AG04450 (cell line): ENCODE measurements at regions of chr5 and their contacts with region 1.

Region 1: DNA sequence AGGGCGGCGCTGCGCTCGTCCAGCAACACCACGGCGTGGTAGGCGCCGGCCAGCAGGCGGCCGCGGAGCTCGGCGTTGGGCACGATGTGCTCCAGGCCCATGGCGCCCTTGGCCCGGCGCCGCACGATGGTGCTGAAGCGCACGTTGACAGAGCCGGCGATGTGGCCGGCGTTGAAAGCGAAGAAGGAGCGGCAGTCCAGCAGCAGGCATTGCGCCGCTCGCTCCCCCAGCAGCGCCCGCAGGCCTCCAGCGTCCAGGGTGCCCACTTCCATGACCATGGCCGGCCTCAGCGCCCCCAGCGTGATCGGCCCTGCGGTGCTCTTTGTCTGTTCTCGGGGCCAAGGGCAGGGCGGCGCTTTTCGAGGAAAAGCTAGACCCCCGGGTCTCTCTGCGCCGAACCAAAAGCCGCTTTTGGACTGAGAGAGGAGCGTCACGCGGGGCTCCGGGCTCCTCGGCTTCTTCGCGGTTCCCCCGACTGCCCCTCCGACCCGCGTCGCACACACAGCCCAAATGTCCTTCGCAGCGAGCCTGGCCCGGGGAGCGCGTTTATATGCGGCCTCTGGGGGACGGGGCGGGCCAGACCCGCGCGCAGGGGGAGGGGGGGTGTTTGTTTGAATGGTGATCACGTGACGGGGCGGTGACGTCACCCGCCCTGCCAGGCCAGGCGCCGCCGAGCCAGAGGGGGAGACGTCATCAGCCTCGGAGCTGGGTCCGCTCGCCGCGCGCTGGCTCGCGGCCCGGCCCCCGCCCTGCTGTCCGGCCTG is at the start of gene DUSP1:
- DNase-seq: peak; percentile 96
- H3K4me3 ChIP-seq: peak within 1 kb of the TSS; percentile 100
- H3K27ac ChIP-seq: peak within 1 kb of the TSS; percentile 100
- H3K27me3 ChIP-seq: no peaks in the 10 kb centered on the region
- CTCF ChIP-seq: peak; percentile 56
- polyA plus RNA-seq, gene DUSP1: 98.8 and 147 TPM in 2 replicates

Region 2: DNA sequence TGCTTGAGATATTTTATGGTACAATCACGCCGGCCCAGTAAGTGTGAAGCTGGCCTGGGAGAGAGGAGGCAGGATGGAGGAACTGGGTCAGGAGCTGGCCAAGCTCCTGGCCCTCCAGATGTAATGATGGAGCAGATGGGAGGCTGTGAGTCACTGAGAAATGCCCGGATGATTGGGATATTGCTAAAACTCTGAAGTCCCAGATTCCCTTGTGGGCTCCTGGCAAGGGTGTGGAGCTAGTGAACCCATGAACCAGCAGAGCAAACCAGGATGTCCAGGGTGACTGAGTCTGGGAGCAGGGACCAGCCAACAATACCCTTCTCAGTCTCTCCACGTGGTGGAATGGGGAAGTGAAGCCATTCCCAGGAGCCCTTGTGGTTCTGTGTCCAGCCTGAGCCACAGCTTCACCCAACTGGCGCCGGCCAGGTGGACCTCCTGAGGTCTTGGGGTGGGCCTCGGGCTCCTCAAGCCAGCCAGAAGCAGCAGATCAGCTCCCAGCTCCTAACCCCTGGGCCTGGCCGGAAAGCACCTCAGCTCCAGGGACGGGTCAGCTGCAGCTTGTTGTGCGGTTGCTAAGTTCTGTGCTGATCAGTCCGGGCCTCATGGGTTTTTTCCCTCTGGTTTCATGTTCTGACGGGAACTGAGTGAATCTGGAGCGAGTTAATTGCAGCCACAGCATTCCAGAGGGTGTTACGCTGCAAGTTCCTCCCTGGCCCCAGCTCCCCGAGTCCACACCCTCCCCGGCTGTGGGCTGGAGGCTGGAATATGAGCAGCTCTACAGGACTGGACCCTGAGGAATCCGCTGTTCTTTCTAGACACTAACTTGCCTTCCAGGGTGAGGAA is 37.5 kb before region 1 on chr5:
- CTCF ChIA-PET with region 1: interaction called, 3 read pairs
- POLR2A ChIA-PET with region 1: interaction called, 14 read pairs
- DNase-seq: peak; percentile 52
- H3K4me3 ChIP-seq: no peak overlapping the region
- H3K27ac ChIP-seq: peak overlapping the region; percentile 75
- H3K27me3 ChIP-seq: no peaks in the 10 kb centered on the region
- CTCF ChIP-seq: no peak

Region 3: GRCh38 chr5:172751766-172752510 is 18.9 kb before region 1 on chr5:
- CTCF ChIA-PET with region 1: no interaction called
- POLR2A ChIA-PET with region 1: no interaction called
- DNase-seq: no peak
- H3K4me3 ChIP-seq: no peak overlapping the region
- H3K27ac ChIP-seq: no peak overlapping the region
- H3K27me3 ChIP-seq: no peaks in the 10 kb centered on the region
- CTCF ChIP-seq: no peak

Region 4: DNA sequence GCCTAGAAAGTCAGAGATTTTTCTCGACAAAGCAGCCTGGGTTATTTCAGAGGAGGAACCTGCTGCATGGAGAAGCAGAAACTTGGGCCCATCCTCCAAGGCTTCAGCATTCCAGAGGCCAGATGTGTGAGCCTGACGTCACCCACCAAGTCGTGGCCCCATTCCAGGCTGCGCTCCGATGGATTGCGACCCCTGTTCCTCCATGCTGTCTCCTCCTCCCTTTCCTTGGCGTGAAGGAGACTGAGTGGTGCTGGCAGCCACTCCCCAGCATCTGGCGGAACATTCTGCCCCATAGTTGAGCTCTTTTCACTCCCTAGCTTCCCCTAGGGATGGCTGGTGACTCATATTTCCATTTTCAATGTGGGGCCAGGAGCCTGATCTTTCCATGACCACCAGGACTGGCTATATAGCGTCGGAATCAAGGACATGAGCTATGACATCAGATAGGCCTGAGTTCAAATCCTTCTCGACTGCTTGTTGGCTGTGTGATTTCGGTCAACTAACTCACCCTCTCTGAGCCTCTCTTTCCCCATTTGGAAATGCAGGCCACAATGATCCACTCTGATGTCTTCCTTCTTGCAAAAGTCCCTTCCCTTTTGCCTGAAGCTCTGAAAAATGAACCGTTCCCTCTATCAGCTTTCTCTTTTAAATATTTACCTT is 24.6 kb after region 1 on chr5:
- CTCF ChIA-PET with region 1: interaction called, 13 read pairs
- POLR2A ChIA-PET with region 1: interaction called, 104 read pairs
- DNase-seq: peak; percentile 97
- H3K4me3 ChIP-seq: no peak overlapping the region
- H3K27ac ChIP-seq: peak overlapping the region; percentile 97
- H3K27me3 ChIP-seq: no peaks in the 10 kb centered on the region
- CTCF ChIP-seq: 0 out of 2 replicates have a peak, but pooled peaks have one; percentile 8

Region 5: GRCh38 chr5:172868924-172869591 is 98.2 kb after region 1 on chr5:
- CTCF ChIA-PET with region 1: no interaction called
- POLR2A ChIA-PET with region 1: interaction called, 29 read pairs
- DNase-seq: no peak
- H3K4me3 ChIP-seq: peak overlapping the region; percentile 29
- H3K27ac ChIP-seq: peak overlapping the region; percentile 91
- H3K27me3 ChIP-seq: no peaks in the 10 kb centered on the region
- CTCF ChIP-seq: peak; percentile 44

Region 6: GRCh38 chr5:172904643-172905347 is 133.9 kb after region 1 on chr5:
- CTCF ChIA-PET with region 1: interaction called, 3 read pairs
- POLR2A ChIA-PET with region 1: interaction called, 44 read pairs
- DNase-seq: no peak
- H3K4me3 ChIP-seq: no peak overlapping the region
- H3K27ac ChIP-seq: peak overlapping the region; percentile 99
- H3K27me3 ChIP-seq: no peaks in the 10 kb centered on the region
- CTCF ChIP-seq: no peak

Region 7: DNA sequence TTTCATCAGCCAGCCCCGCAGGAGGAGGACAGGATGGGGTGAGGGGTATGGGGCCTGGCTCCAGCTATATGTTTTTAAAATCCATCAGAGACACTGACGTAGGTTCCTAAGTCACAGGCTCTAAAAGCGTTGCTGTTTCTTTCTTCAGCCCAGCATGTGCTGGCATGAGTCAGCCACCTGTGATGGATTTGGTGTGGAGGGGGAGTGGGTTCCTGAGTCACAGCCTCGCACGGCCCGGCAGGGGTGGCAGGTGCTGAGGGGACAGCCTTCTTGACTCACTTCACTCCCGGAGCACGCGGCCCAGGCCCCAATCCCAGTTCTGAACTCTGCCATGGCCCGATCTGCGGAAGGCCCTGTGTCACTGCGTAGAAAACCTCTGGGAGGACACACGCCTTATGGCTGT is 149.6 kb after region 1 on chr5:
- CTCF ChIA-PET with region 1: interaction called, 3 read pairs
- POLR2A ChIA-PET with region 1: interaction called, 11 read pairs
- DNase-seq: peak; percentile 99
- H3K4me3 ChIP-seq: no peak overlapping the region
- H3K27ac ChIP-seq: peak overlapping the region; percentile 100
- H3K27me3 ChIP-seq: no peaks in the 10 kb centered on the region
- CTCF ChIP-seq: no peak

Region 8: GRCh38 chr5:173093597-173093996 is 322.7 kb after region 1 on chr5:
- CTCF ChIA-PET with region 1: interaction called, 10 read pairs
- POLR2A ChIA-PET with region 1: no interaction called
- DNase-seq: no peak
- H3K4me3 ChIP-seq: no peak overlapping the region
- H3K27ac ChIP-seq: no peak overlapping the region
- H3K27me3 ChIP-seq: no peaks in the 10 kb centered on the region
- CTCF ChIP-seq: no peak